ENCODE measurements at regions of chr17 and their contacts with region 1.

Region 1: DNA sequence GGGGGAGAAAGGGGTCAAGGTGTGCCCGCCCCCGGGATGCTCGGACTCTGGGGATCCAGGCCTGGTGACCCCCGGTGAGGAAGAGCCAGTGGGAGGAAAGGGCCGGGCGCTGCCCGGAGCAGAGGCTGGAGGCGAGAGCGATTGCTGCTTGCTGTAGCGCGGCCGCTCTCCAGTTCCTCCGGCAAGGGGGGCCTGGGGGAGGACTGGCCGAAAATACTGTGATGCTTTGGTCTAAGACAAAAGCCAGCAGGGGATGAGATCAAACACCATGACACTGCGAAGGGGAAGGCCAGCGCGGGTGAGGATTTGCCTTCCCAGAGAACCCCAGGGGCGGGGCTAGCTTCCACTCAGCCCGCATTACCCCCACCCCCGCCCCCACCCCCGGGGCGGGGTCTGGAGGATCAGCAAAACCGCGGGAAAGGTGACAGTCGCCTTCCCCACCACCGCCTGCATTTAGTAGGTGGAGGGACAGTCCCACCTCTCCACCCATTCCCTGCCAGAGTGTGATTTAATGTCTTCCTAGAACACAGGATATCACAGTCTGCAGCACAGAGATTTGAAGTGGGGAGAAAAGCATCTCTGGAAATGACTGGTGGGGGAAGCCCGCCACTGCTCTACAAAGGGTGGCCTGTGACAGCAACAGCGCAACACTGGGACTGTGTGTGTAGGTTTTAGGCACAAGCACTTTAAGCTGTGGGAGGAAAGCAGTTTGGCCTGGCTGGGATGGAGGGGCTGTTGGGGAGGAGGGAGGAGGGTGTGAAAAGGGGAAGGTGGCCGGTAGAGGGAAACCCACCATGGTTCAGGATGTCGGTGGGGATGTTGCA is 25.7 kb downstream of the MRC2 start:
- DNase-seq: peak; percentile 97
- ATAC-seq: peak; percentile 94
- H3K4me3 Mint-ChIP-seq: peak overlapping the region; percentile 73
- H3K27ac Mint-ChIP-seq: peak overlapping the region; percentile 80
- H3K4me1 Mint-ChIP-seq: peaks cover 22% of the 10 kb centered on the region
- H3K27me3 Mint-ChIP-seq: peaks cover 27% of the 10 kb centered on the region
- CTCF ChIP-seq: no peak

Region 2: DNA sequence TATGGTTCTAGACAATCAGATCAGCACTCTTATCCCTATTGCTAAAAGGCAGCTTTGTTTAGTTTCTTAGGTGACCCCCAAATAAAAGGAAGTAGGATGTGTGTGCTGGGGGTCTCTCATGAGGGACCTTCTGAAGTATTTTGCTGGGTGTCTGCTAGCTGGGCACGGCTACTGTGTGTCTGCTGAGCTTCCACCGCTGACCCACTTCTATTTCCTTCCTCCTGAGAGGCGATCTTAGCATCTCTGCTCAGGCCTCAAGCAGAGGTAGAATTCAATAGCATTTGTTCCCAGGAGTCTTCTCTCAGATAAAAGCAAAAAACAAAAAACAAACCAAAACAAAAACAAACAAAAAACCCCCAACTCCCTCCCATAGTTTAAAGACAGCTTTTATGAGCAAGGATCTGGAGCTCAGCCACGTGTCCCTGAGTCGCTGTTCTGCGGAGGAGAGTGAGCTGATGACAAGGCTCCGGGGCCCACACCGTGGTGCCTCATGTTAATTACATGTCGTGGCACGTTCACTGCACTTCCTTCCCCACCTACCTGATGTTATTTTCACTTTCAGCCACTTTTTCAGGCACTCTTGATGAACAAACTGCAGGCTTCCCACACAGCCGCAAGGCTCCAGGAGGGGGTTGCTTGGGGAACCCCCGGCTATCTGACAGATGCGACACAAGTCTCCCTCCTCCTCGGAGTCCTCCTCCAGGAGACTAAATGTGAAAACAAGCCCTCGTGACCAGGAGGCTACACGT is 71.4 kb after region 1 on chr17:
- CTCF ChIA-PET with region 1: interaction called, 3 read pairs
- POLR2A ChIA-PET with region 1: interaction called, 5 read pairs
- intact Hi-C with region 1: loop called (anchors 10 kb)
- DNase-seq: peak; percentile 95
- ATAC-seq: peak; percentile 96
- H3K4me3 Mint-ChIP-seq: peak overlapping the region; percentile 6
- H3K27ac Mint-ChIP-seq: peak overlapping the region; percentile 47
- H3K4me1 Mint-ChIP-seq: peaks cover 29% of the 10 kb centered on the region
- H3K27me3 Mint-ChIP-seq: peaks cover 41% of the 10 kb centered on the region
- CTCF ChIP-seq: no peak